B cell (primary cell): ENCODE measurements at regions of chr11 and their contacts with region 1.

Region 1: DNA sequence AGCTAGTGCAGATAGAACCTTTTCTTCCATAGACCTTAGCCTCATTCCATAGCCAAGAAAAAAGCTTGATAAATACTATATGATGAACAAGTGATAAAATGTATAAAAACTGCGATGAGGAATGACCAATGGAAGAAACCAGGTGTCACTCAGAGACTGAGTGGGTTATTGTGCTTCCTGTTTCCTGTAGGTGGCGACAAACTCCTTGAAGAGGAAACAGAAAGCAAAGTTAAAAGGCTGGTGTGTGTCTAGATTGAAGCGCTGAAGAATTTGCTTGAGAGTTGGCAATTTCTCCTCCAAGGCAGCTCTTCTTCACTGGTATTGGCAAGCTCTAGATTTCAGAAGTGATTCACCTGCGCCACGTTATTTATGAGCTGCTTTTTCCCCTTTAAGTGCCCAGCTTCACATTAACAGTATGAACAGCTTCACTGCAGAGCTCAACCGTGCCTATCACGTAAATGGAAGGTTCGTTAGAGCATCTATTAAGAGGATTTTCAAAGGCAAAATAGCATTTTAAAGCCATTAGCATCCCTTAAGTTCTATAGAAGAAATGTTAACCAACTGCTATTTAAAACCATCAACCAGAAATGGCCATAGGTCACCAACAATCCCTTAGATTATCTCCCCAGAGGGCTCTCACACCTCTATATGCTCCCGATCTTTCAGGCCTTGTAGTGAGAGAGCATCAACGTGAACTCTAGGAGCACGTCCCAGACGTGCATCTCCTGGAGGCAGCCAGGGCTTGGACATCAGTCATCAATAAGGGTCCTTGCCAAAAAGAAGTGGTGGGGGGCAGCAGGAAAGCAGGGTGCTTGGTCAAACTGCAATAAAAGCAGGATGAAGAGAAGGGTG is 179.4 kb downstream of the CADM1 start:
- DNase-seq: peak; percentile 41
- ATAC-seq: no peak
- H3K4me3 ChIP-seq: no peak overlapping the region
- H3K4me3 Mint-ChIP-seq: no peak overlapping the region
- H3K27ac ChIP-seq: no peak overlapping the region
- H3K27ac Mint-ChIP-seq: no peak overlapping the region
- H3K4me1 ChIP-seq: peaks cover 0 to 3% of the 10 kb centered on the region in 2 donors
- H3K4me1 Mint-ChIP-seq: no peaks in the 10 kb centered on the region
- H3K27me3 ChIP-seq: no peaks in the 10 kb centered on the region
- H3K27me3 Mint-ChIP-seq: peaks cover 3% of the 10 kb centered on the region
- CTCF ChIP-seq: peak; percentile 61

Region 2: GRCh38 chr11:115379528-115379927 is 54.7 kb after region 1 on chr11:
- CTCF ChIA-PET with region 1: no interaction called
- POLR2A ChIA-PET with region 1: no interaction called
- intact Hi-C with region 1: no loop called
- DNase-seq: no peak
- ATAC-seq: no peak
- H3K4me3 ChIP-seq: no peak overlapping the region
- H3K4me3 Mint-ChIP-seq: no peak overlapping the region
- H3K27ac ChIP-seq: no peak overlapping the region
- H3K27ac Mint-ChIP-seq: no peak overlapping the region
- H3K4me1 ChIP-seq: no peaks in the 10 kb centered on the region
- H3K4me1 Mint-ChIP-seq: no peaks in the 10 kb centered on the region
- H3K27me3 ChIP-seq: no peaks in the 10 kb centered on the region
- H3K27me3 Mint-ChIP-seq: peaks cover 12% of the 10 kb centered on the region
- CTCF ChIP-seq: no peak

Region 3: GRCh38 chr11:116276051-116277044 is 951.5 kb after region 1 on chr11:
- CTCF ChIA-PET with region 1: no interaction called
- POLR2A ChIA-PET with region 1: no interaction called
- intact Hi-C with region 1: loop called (anchors 5 kb)
- DNase-seq: peak; percentile 61
- ATAC-seq: no peak
- H3K4me3 ChIP-seq: no peak overlapping the region
- H3K4me3 Mint-ChIP-seq: no peak overlapping the region
- H3K27ac ChIP-seq: no peak overlapping the region
- H3K27ac Mint-ChIP-seq: no peak overlapping the region
- H3K4me1 ChIP-seq: peaks cover 0 to 3% of the 10 kb centered on the region in 2 donors
- H3K4me1 Mint-ChIP-seq: no peaks in the 10 kb centered on the region
- H3K27me3 ChIP-seq: peaks cover 0 to 4% (median 0%) of the 10 kb centered on the region in 4 experiments
- H3K27me3 Mint-ChIP-seq: peaks cover 3% of the 10 kb centered on the region
- CTCF ChIP-seq: peak; percentile 71